ENCODE measurements at regions of chr22 and their contacts with region 1.

Region 1: GRCh38 chr22:46563381-46564083 is 26.1 kb upstream of the CELSR1 start:
- DNase-seq: peak; percentile 66 to 88 (median 74)
- ATAC-seq: peak; percentile 96
- H3K4me3 ChIP-seq: peak overlapping the region; percentile 30
- H3K4me3 Mint-ChIP-seq: peak overlapping the region; percentile 38
- H3K27ac ChIP-seq: no peak overlapping the region
- H3K27ac Mint-ChIP-seq: no peak overlapping the region
- H3K4me1 ChIP-seq: peaks cover 13% of the 10 kb centered on the region
- H3K4me1 Mint-ChIP-seq: peaks cover 9% of the 10 kb centered on the region
- H3K27me3 ChIP-seq: no peaks in the 10 kb centered on the region
- H3K27me3 Mint-ChIP-seq: no peaks in the 10 kb centered on the region
- CTCF ChIP-seq: peak; percentile 76

Region 2: GRCh38 chr22:46399251-46399999 is 164.1 kb before region 1 on chr22:
- CTCF ChIA-PET with region 1: no interaction called
- POLR2A ChIA-PET with region 1: no interaction called
- intact Hi-C with region 1: no loop called
- DNase-seq: peak in 1 of 14 experiments; percentile 17
- ATAC-seq: no peak
- H3K4me3 ChIP-seq: no peak overlapping the region
- H3K4me3 Mint-ChIP-seq: no peak overlapping the region
- H3K27ac ChIP-seq: no peak overlapping the region
- H3K27ac Mint-ChIP-seq: no peak overlapping the region
- H3K4me1 ChIP-seq: peaks cover 9% of the 10 kb centered on the region
- H3K4me1 Mint-ChIP-seq: no peaks in the 10 kb centered on the region
- H3K27me3 ChIP-seq: no peaks in the 10 kb centered on the region
- H3K27me3 Mint-ChIP-seq: no peaks in the 10 kb centered on the region
- CTCF ChIP-seq: no peak

Region 3: GRCh38 chr22:46598737-46599424 is 35.3 kb after region 1 on chr22:
- CTCF ChIA-PET with region 1: interaction called, 10 read pairs
- POLR2A ChIA-PET with region 1: no interaction called
- intact Hi-C with region 1: no loop called
- DNase-seq: peak in 2 of 14 experiments; percentile 49 to 64
- ATAC-seq: no peak
- H3K4me3 ChIP-seq: no peak overlapping the region
- H3K4me3 Mint-ChIP-seq: no peak overlapping the region
- H3K27ac ChIP-seq: no peak overlapping the region
- H3K27ac Mint-ChIP-seq: no peak overlapping the region
- H3K4me1 ChIP-seq: peaks cover 3% of the 10 kb centered on the region
- H3K4me1 Mint-ChIP-seq: peaks cover 3% of the 10 kb centered on the region
- H3K27me3 ChIP-seq: no peaks in the 10 kb centered on the region
- H3K27me3 Mint-ChIP-seq: no peaks in the 10 kb centered on the region
- CTCF ChIP-seq: no peak

Region 4: GRCh38 chr22:46684706-46685105 is 121.2 kb after region 1 on chr22:
- CTCF ChIA-PET with region 1: interaction called, 7 read pairs
- POLR2A ChIA-PET with region 1: no interaction called
- intact Hi-C with region 1: loop called (anchors 2 to 5 kb)
- DNase-seq: peak in 3 of 14 experiments; percentile 16 to 41 (median 26)
- ATAC-seq: no peak
- H3K4me3 ChIP-seq: no peak overlapping the region
- H3K4me3 Mint-ChIP-seq: no peak overlapping the region
- H3K27ac ChIP-seq: no peak overlapping the region
- H3K27ac Mint-ChIP-seq: peak overlapping the region; percentile 85
- H3K4me1 ChIP-seq: peaks cover 22% of the 10 kb centered on the region
- H3K4me1 Mint-ChIP-seq: peaks cover 30% of the 10 kb centered on the region
- H3K27me3 ChIP-seq: no peaks in the 10 kb centered on the region
- H3K27me3 Mint-ChIP-seq: no peaks in the 10 kb centered on the region
- CTCF ChIP-seq: no peak

Region 5: GRCh38 chr22:46798366-46799350 is 235.1 kb after region 1 on chr22:
- CTCF ChIA-PET with region 1: interaction called, 3 read pairs
- POLR2A ChIA-PET with region 1: no interaction called
- intact Hi-C with region 1: loop called (anchors 1 kb)
- DNase-seq: peak; percentile 54 to 85 (median 78)
- ATAC-seq: peak; percentile 85
- H3K4me3 ChIP-seq: no peak overlapping the region
- H3K4me3 Mint-ChIP-seq: peak overlapping the region; percentile 8
- H3K27ac ChIP-seq: no peak overlapping the region
- H3K27ac Mint-ChIP-seq: peak overlapping the region; percentile 84
- H3K4me1 ChIP-seq: peaks cover 14% of the 10 kb centered on the region
- H3K4me1 Mint-ChIP-seq: peaks cover 47% of the 10 kb centered on the region
- H3K27me3 ChIP-seq: no peaks in the 10 kb centered on the region
- H3K27me3 Mint-ChIP-seq: no peaks in the 10 kb centered on the region
- CTCF ChIP-seq: peak; percentile 79